ENCODE measurements at regions of chr9 and their contacts with region 1.

Region 1: GRCh38 chr9:109574068-109574882 is 76.2 kb upstream of the PTPN3 start:
- DNase-seq: peak; percentile 76
- H3K4me3 Mint-ChIP-seq: no peak overlapping the region
- H3K27ac Mint-ChIP-seq: no peak overlapping the region
- H3K4me1 Mint-ChIP-seq: peaks cover 5% of the 10 kb centered on the region
- H3K27me3 Mint-ChIP-seq: no peaks in the 10 kb centered on the region
- CTCF ChIP-seq: peak; percentile 71

Region 2: GRCh38 chr9:109286571-109286977 is 287.7 kb before region 1 on chr9:
- CTCF ChIA-PET with region 1: no interaction called
- POLR2A ChIA-PET with region 1: no interaction called
- intact Hi-C with region 1: no loop called
- DNase-seq: peak; percentile 77
- H3K4me3 Mint-ChIP-seq: peak overlapping the region; percentile 2
- H3K27ac Mint-ChIP-seq: peak overlapping the region; percentile 55
- H3K4me1 Mint-ChIP-seq: peaks cover 22% of the 10 kb centered on the region
- H3K27me3 Mint-ChIP-seq: no peaks in the 10 kb centered on the region
- CTCF ChIP-seq: no peak

Region 3: DNA sequence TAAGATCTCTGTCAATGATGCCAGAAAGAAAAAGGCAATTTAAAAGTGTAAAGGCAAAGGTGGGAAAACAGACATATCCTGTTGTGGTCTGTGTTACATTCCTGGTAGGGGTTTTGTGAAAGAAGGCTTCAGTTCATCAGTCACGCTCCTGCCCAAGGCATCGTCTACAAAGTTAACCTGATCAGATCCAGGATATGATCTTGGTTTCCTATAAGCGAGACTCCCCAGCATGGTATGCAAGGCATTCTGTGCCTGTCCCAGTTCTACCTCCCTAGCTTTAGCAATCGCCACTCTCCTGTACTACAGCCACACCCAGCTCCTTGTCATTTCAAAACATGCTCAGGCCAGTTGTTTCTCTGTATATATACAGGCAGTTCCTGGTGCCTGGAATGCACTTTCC is 18.2 kb before region 1 on chr9:
- CTCF ChIA-PET with region 1: interaction called, 12 read pairs
- POLR2A ChIA-PET with region 1: interaction called, 12 read pairs
- intact Hi-C with region 1: no loop called
- DNase-seq: peak; percentile 65
- H3K4me3 Mint-ChIP-seq: peak overlapping the region; percentile 1
- H3K27ac Mint-ChIP-seq: peak overlapping the region; percentile 66
- H3K4me1 Mint-ChIP-seq: peaks cover 58% of the 10 kb centered on the region
- H3K27me3 Mint-ChIP-seq: no peaks in the 10 kb centered on the region
- CTCF ChIP-seq: no peak

Region 4: GRCh38 chr9:109590945-109591344 is 16.7 kb after region 1 on chr9:
- CTCF ChIA-PET with region 1: no interaction called
- POLR2A ChIA-PET with region 1: no interaction called
- intact Hi-C with region 1: no loop called
- DNase-seq: no peak
- H3K4me3 Mint-ChIP-seq: no peak overlapping the region
- H3K27ac Mint-ChIP-seq: no peak overlapping the region
- H3K4me1 Mint-ChIP-seq: no peaks in the 10 kb centered on the region
- H3K27me3 Mint-ChIP-seq: no peaks in the 10 kb centered on the region
- CTCF ChIP-seq: no peak

Region 5: GRCh38 chr9:109779711-109780452 is 205.6 kb after region 1 on chr9 and contains the start of gene PALM2AKAP2:
- CTCF ChIA-PET with region 1: interaction called, 6 read pairs
- POLR2A ChIA-PET with region 1: interaction called, 3 read pairs
- intact Hi-C with region 1: loop called (anchors 1 kb)
- DNase-seq: peak; percentile 60
- H3K4me3 Mint-ChIP-seq: peak within 1 kb of the TSS; percentile 80
- H3K27ac Mint-ChIP-seq: no peak within 1 kb of the TSS
- H3K4me1 Mint-ChIP-seq: peaks cover 6% of the 10 kb centered on the region
- H3K27me3 Mint-ChIP-seq: no peaks in the 10 kb centered on the region
- CTCF ChIP-seq: peak; percentile 3
- total RNA-seq, gene PALM2AKAP2: 5.3 and 9.1 TPM in 2 replicates

Region 6: DNA sequence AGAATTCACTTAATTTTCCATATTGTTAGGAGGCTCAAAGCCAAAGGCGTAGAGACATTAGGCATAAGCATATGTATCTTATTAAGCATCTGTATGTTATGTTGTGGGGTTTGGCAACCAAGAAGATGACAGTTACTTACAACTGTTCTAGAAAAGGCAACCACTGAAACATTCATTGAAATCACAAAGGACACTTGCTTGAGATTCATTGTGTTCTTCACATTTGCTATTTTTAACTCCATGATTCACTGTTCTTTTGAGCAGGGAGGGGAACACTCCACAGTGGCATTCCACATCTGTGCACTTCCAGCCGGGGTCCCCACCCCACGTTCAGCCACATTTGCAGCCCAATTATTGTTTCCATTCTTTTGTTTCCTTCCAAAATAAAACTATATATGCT is 312.8 kb after region 1 on chr9:
- CTCF ChIA-PET with region 1: no interaction called
- POLR2A ChIA-PET with region 1: interaction called, 3 read pairs
- intact Hi-C with region 1: loop called (anchors 5 kb)
- DNase-seq: peak; percentile 38
- H3K4me3 Mint-ChIP-seq: no peak overlapping the region
- H3K27ac Mint-ChIP-seq: peak overlapping the region; percentile 54
- H3K4me1 Mint-ChIP-seq: peaks cover 38% of the 10 kb centered on the region
- H3K27me3 Mint-ChIP-seq: no peaks in the 10 kb centered on the region
- CTCF ChIP-seq: no peak

Region 7: GRCh38 chr9:110058304-110058953 is 484.2 kb after region 1 on chr9:
- CTCF ChIA-PET with region 1: interaction called, 4 read pairs
- POLR2A ChIA-PET with region 1: interaction called, 3 read pairs
- intact Hi-C with region 1: loop called (anchors 2 kb)
- DNase-seq: peak; percentile 87
- H3K4me3 Mint-ChIP-seq: no peak overlapping the region
- H3K27ac Mint-ChIP-seq: peak overlapping the region; percentile 72
- H3K4me1 Mint-ChIP-seq: peaks cover 14% of the 10 kb centered on the region
- H3K27me3 Mint-ChIP-seq: no peaks in the 10 kb centered on the region
- CTCF ChIP-seq: peak; percentile 83

Region 8: DNA sequence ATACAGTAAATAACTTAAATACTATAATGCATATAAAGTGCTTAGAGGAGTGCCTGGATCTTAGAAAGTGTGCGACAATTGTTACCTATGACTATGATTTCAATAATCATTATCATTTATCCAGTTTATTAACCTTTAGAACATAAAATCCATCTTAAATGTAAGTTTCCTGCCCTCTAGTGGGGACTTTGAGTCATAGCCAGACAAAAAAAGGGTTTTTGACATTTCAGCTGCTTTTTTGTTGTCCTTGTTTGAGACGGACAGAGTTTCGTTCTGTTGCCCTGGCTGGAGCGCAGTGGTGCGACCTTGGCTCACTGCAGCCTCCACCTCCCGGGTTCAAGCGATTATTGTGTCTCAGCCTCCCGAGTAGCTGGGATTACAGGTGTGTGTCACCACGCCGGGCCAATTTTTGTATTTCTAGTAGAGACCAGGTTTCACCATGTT is 643.4 kb after region 1 on chr9:
- CTCF ChIA-PET with region 1: no interaction called
- POLR2A ChIA-PET with region 1: no interaction called
- intact Hi-C with region 1: loop called (anchors 10 kb)
- DNase-seq: peak; percentile 50
- H3K4me3 Mint-ChIP-seq: no peak overlapping the region
- H3K27ac Mint-ChIP-seq: no peak overlapping the region
- H3K4me1 Mint-ChIP-seq: peaks cover 11% of the 10 kb centered on the region
- H3K27me3 Mint-ChIP-seq: no peaks in the 10 kb centered on the region
- CTCF ChIP-seq: peak; percentile 47